Activated CD8-positive, alpha-beta T cell treated with anti-CD3 and anti-CD28 coated beads, Interleukin-2, amount 10 ng/mL, durations not matched to agents 7 days and 5 days (primary cell): ENCODE measurements at regions of chr2 and their contacts with region 1.

Region 1: GRCh38 chr2:199973703-199974102 is 18.3 kb downstream of the MAIP1 start:
- DNase-seq: no peak
- ATAC-seq: no peak
- H3K4me3 Mint-ChIP-seq: no peak overlapping the region
- H3K27ac Mint-ChIP-seq: no peak overlapping the region
- H3K4me1 Mint-ChIP-seq: peaks cover 13% of the 10 kb centered on the region
- H3K27me3 Mint-ChIP-seq: no peaks in the 10 kb centered on the region

Region 2: GRCh38 chr2:199850718-199851500 is 122.8 kb before region 1 on chr2 and contains the start of gene FTCDNL1:
- CTCF ChIA-PET with region 1: no interaction called
- POLR2A ChIA-PET with region 1: no interaction called
- DNase-seq: peak; percentile 76
- ATAC-seq: peak; percentile 96
- H3K4me3 Mint-ChIP-seq: peak within 1 kb of the TSS; percentile 88
- H3K27ac Mint-ChIP-seq: peak within 1 kb of the TSS; percentile 77
- H3K4me1 Mint-ChIP-seq: peaks cover 7% of the 10 kb centered on the region
- H3K27me3 Mint-ChIP-seq: peaks cover 17% of the 10 kb centered on the region
- total RNA-seq, gene FTCDNL1: 1.5 to 1.9 TPM

Region 3: GRCh38 chr2:199985625-199986207 is 12.0 kb after region 1 on chr2:
- CTCF ChIA-PET with region 1: interaction called, 21 read pairs
- POLR2A ChIA-PET with region 1: no interaction called
- DNase-seq: peak; percentile 78
- ATAC-seq: peak; percentile 85
- H3K4me3 Mint-ChIP-seq: no peak overlapping the region
- H3K27ac Mint-ChIP-seq: peak overlapping the region; percentile 32
- H3K4me1 Mint-ChIP-seq: peaks cover 5% of the 10 kb centered on the region
- H3K27me3 Mint-ChIP-seq: no peaks in the 10 kb centered on the region